Lower leg skin (tissue), 4 donors: ENCODE measurements at regions of chr19 and their contacts with region 1.

Region 1: DNA sequence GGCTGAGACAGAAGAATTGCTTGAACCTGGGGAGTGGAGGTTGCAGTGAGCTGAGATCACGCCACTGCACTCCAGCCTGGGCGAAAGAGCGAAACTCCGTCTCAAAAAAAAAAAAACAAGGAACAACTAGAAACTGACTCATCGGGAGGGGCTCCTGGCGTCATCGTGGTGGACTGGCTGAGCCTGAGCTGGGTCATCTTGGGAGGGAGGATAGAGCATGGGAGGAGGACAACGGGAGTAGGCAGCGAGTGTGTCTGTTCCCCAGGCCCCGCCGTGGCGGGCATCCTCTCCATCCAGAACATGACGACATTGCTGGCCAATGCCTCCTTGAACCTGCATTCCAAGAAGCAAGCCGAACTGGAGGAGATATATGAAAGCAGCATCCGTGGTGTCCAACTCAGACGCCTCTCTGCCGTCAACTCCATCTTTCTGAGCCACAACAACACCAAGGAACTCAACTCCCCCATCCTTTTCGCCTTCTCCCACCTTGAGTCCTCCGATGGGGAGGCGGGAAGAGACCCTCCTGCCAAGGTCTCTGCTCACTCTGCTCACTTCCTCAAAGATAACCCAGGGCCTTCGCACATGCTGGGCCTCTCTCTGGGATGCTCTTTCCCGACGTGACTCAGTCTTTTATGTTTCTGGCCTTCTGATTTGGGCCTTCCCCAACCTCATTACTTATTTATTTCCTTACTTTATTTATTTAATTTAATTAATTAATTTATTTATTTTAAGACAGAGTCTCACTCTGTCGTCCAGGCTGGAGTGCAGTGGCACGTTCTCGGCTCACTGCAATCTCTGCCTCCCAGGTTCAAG is 16.6 kb downstream of the DDX39A start:
- DNase-seq: peak; percentile 70 to 92
- H3K4me3 ChIP-seq: no peak overlapping the region
- CTCF ChIP-seq: no peak
- POLR2A ChIP-seq: no peak

Region 2: GRCh38 chr19:14381689-14382474 is 20.7 kb before region 1 on chr19:
- intact Hi-C with region 1: loop called (anchors 1 kb)
- DNase-seq: no peak
- H3K4me3 ChIP-seq: peak overlapping the region; percentile 16
- CTCF ChIP-seq: no peak
- POLR2A ChIP-seq: no peak